T-cell (primary cell): ENCODE measurements at regions of chr12 and their contacts with region 1.

Region 1: GRCh38 chr12:53543539-53543938 is 36.3 kb upstream of the NPFF start:
- DNase-seq: peak in 33 of 35 experiments; percentile 3 to 72 (median 45)
- ATAC-seq: peak; percentile 88 to 93 (median 91)
- H3K4me3 ChIP-seq: no peak overlapping the region
- H3K4me3 Mint-ChIP-seq: no peak overlapping the region
- H3K27ac ChIP-seq: peak overlapping the region; percentile 15
- H3K27ac Mint-ChIP-seq: peak overlapping the region; percentile 84 to 85
- H3K4me1 ChIP-seq: peaks cover 4% of the 10 kb centered on the region in 2 experiments
- H3K4me1 Mint-ChIP-seq: peaks cover 7 to 14% (median 9%) of the 10 kb centered on the region in 3 donors
- H3K27me3 ChIP-seq: no peaks in the 10 kb centered on the region
- H3K27me3 Mint-ChIP-seq: no peaks in the 10 kb centered on the region

Region 2: GRCh38 chr12:53159195-53159839 is 384.2 kb before region 1 on chr12:
- CTCF ChIA-PET with region 1: no interaction called
- POLR2A ChIA-PET with region 1: no interaction called
- DNase-seq: peak; percentile 69 to 93 (median 85)
- ATAC-seq: peak; percentile 97 to 99 (median 97)
- H3K4me3 ChIP-seq: no peak overlapping the region
- H3K4me3 Mint-ChIP-seq: no peak overlapping the region
- H3K27ac ChIP-seq: no peak overlapping the region
- H3K27ac Mint-ChIP-seq: peak overlapping the region in 1 of 2 donors; percentile 49
- H3K4me1 ChIP-seq: peaks cover 0 to 9% of the 10 kb centered on the region in 2 experiments
- H3K4me1 Mint-ChIP-seq: peaks cover 4 to 9% (median 5%) of the 10 kb centered on the region in 3 donors
- H3K27me3 ChIP-seq: no peaks in the 10 kb centered on the region
- H3K27me3 Mint-ChIP-seq: no peaks in the 10 kb centered on the region

Region 3: GRCh38 chr12:53675651-53676453 is 132.3 kb after region 1 on chr12 and contains the start of gene ATP5MC2:
- CTCF ChIA-PET with region 1: interaction called, 3 to 35 read pairs
- POLR2A ChIA-PET with region 1: interaction called in 1 of 2 experiments, 3 read pairs
- DNase-seq: peak; percentile 92 to 100 (median 96)
- ATAC-seq: peak; percentile 90 to 94 (median 93)
- H3K4me3 ChIP-seq: peak within 1 kb of the TSS; percentile 64 to 82
- H3K4me3 Mint-ChIP-seq: peak within 1 kb of the TSS; percentile 87 to 93 (median 92)
- H3K27ac ChIP-seq: peak within 1 kb of the TSS; percentile 55
- H3K27ac Mint-ChIP-seq: peak within 1 kb of the TSS; percentile 92 to 97
- H3K4me1 ChIP-seq: peaks cover 19 to 27% of the 10 kb centered on the region in 2 experiments
- H3K4me1 Mint-ChIP-seq: peaks cover 20 to 40% (median 39%) of the 10 kb centered on the region in 3 donors
- H3K27me3 ChIP-seq: peaks cover 3 to 19% of the 10 kb centered on the region in 2 experiments
- H3K27me3 Mint-ChIP-seq: peaks cover 15 to 23% of the 10 kb centered on the region in 2 donors
- total RNA-seq, gene ATP5MC2: 223 to 283 (median 251) TPM